Heart right ventricle (tissue), 16 donors: ENCODE measurements at regions of chr13 and their contacts with region 1.

Region 1: GRCh38 chr13:35164324-35164932 is 222.4 kb downstream of the NBEA start:
- DNase-seq: no peak
- ATAC-seq: peak in 3 of 8 donors; percentile 54 to 71 (median 65)
- H3K4me3 ChIP-seq: no peak overlapping the region
- H3K27ac ChIP-seq: no peak overlapping the region
- H3K4me1 ChIP-seq: peaks cover 0 to 20% (median 6%) of the 10 kb centered on the region in 9 donors
- H3K27me3 ChIP-seq: no peaks in the 10 kb centered on the region
- CTCF ChIP-seq: peak; percentile 51 to 82 (median 71)

Region 2: GRCh38 chr13:33799950-33800592 is 1364.4 kb before region 1 on chr13:
- intact Hi-C with region 1: loop called in 2 of 10 experiments (anchors 5 to 10 kb)
- DNase-seq: no peak
- ATAC-seq: peak in 6 of 8 donors; percentile 18 to 64 (median 46)
- H3K4me3 ChIP-seq: peak overlapping the region in 4 of 10 donors; percentile 2 to 33 (median 10)
- H3K27ac ChIP-seq: peak overlapping the region in 4 of 10 donors; percentile 6 to 79 (median 52)
- H3K4me1 ChIP-seq: peaks cover 0 to 41% (median 20%) of the 10 kb centered on the region in 9 donors
- H3K27me3 ChIP-seq: no peaks in the 10 kb centered on the region
- CTCF ChIP-seq: peak in 7 of 9 donors; percentile 30 to 71 (median 61)

Region 3: GRCh38 chr13:33931397-33932311 is 1232.8 kb before region 1 on chr13:
- intact Hi-C with region 1: loop called in 7 of 10 experiments (anchors 2 to 10 kb)
- DNase-seq: peak in 1 of 2 donors; percentile 28
- ATAC-seq: peak in 7 of 8 donors; percentile 64 to 85 (median 75)
- H3K4me3 ChIP-seq: no peak overlapping the region
- H3K27ac ChIP-seq: no peak overlapping the region
- H3K4me1 ChIP-seq: peaks cover 0 to 13% (median 0%) of the 10 kb centered on the region in 9 donors
- H3K27me3 ChIP-seq: no peaks in the 10 kb centered on the region
- CTCF ChIP-seq: peak in 8 of 9 donors; percentile 23 to 69 (median 56)

Region 4: DNA sequence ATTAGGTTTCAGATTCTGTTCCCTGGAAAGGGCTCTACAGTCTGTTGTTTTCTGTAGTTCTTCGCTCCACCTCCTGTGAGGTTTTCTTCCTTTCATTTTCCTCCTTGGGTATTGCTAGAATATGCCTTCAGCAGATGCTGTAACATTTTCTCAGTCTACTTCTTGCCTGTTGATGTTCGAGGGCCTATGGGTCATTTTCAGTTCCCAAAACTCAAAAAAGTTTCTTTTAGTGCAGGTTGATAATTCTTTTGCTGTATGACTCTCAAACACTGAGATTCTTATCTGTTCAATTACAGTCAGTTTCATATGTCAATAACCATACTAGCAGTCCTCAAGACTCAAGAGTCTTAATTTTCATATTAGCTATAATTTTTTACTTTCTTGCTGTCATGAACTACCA is 1078.1 kb before region 1 on chr13:
- intact Hi-C with region 1: loop called in 2 of 10 experiments (anchors 10 kb)
- DNase-seq: no peak
- ATAC-seq: no peak
- H3K4me3 ChIP-seq: no peak overlapping the region
- H3K27ac ChIP-seq: no peak overlapping the region
- H3K4me1 ChIP-seq: no peaks in the 10 kb centered on the region
- H3K27me3 ChIP-seq: no peaks in the 10 kb centered on the region
- CTCF ChIP-seq: no peak

Region 5: DNA sequence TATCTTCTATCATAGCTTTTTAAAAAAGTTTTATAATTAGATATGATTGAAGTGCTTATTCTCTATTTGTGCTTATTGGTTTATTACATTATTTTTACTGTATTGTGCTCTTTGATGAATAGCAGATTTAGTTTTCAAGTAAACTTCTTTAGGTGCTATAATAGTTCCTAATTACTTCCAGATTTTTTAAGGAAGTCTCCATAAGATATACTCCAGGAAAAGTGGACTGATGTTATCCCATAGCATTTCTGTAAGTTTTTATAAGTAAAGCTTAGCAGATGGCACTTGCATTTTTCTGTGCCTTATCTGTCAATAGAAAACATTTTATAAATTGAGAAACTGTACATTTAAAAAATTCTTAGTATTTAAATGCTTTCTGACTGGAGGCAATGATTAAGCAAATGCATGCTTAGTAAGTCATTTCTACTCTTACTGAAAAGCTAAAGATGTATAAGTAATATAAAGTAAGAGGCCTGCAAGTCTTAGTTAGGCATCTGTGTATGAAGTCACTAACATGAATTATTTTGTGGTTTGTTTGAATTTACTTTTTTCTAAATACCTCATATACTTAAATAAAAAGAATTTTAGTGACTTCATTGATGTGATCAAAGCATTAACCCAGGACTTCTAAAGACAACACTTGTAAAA is 129.3 kb after region 1 on chr13:
- intact Hi-C with region 1: no loop called
- DNase-seq: no peak
- ATAC-seq: no peak
- H3K4me3 ChIP-seq: no peak overlapping the region
- H3K27ac ChIP-seq: no peak overlapping the region
- H3K4me1 ChIP-seq: no peaks in the 10 kb centered on the region
- H3K27me3 ChIP-seq: no peaks in the 10 kb centered on the region
- CTCF ChIP-seq: no peak